Caco-2 (cell line): ENCODE measurements at regions of chr3 and their contacts with region 1.

Region 1: GRCh38 chr3:75171630-75172230 is 492.4 kb upstream of the FRG2C start:
- DNase-seq: peak in 1 of 2 experiments; percentile 12
- H3K4me3 ChIP-seq: no peak overlapping the region
- H3K4me3 Mint-ChIP-seq: no peak overlapping the region
- H3K27ac Mint-ChIP-seq: no peak overlapping the region
- H3K4me1 ChIP-seq: no peaks in the 10 kb centered on the region
- H3K4me1 Mint-ChIP-seq: no peaks in the 10 kb centered on the region
- H3K27me3 ChIP-seq: no peaks in the 10 kb centered on the region
- H3K27me3 Mint-ChIP-seq: peaks cover under 1% of the 10 kb centered on the region
- CTCF ChIP-seq: peak; percentile 18 to 26

Region 2: DNA sequence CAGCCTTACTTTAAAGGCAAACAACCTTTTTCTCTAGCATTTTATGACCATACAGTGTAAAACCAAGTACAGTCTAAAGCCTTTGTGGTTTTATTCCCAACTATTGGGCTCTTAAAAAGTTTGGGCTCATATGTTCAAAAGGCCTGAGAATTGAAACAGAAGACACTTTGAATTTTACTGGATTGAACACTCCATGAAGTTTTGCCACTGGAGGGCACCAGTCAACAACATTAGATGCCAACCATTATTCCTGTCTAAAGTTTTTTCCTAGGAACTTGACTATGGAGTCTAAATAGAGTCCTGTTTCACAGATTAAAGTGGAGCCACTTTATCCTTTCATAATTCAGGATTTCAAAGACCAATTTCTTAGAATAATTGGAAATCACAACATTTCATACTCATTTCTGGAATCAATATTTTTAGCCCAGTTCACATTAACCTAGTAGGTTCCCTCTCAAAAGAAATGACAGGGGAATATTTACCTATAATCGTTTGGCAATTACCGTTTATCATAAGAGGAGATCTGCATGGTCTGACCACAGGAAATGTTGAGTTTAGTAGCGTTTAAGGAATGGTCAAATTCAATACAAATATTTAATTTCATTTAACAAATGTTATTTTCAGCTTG is 1302.9 kb before region 1 on chr3:
- CTCF ChIA-PET with region 1: no interaction called
- POLR2A ChIA-PET with region 1: no interaction called
- intact Hi-C with region 1: loop called (anchors 5 kb)
- DNase-seq: peak in 1 of 2 experiments; percentile 26
- H3K4me3 ChIP-seq: no peak overlapping the region
- H3K4me3 Mint-ChIP-seq: no peak overlapping the region
- H3K27ac Mint-ChIP-seq: no peak overlapping the region
- H3K4me1 ChIP-seq: no peaks in the 10 kb centered on the region
- H3K4me1 Mint-ChIP-seq: no peaks in the 10 kb centered on the region
- H3K27me3 ChIP-seq: no peaks in the 10 kb centered on the region
- H3K27me3 Mint-ChIP-seq: peaks cover 9% of the 10 kb centered on the region
- CTCF ChIP-seq: peak; percentile 55 to 56

Region 3: GRCh38 chr3:74267588-74268184 is 904.0 kb before region 1 on chr3:
- CTCF ChIA-PET with region 1: no interaction called
- POLR2A ChIA-PET with region 1: no interaction called
- intact Hi-C with region 1: loop called (anchors 2 kb)
- DNase-seq: peak; percentile 36 to 60
- H3K4me3 ChIP-seq: no peak overlapping the region
- H3K4me3 Mint-ChIP-seq: no peak overlapping the region
- H3K27ac Mint-ChIP-seq: no peak overlapping the region
- H3K4me1 ChIP-seq: no peaks in the 10 kb centered on the region
- H3K4me1 Mint-ChIP-seq: peaks cover 7% of the 10 kb centered on the region
- H3K27me3 ChIP-seq: no peaks in the 10 kb centered on the region
- H3K27me3 Mint-ChIP-seq: peaks cover 4% of the 10 kb centered on the region
- CTCF ChIP-seq: peak; percentile 59 to 79

Region 4: GRCh38 chr3:75015280-75015679 is 156.4 kb before region 1 on chr3:
- CTCF ChIA-PET with region 1: no interaction called
- POLR2A ChIA-PET with region 1: no interaction called
- intact Hi-C with region 1: loop called (anchors 10 kb)
- DNase-seq: no peak
- H3K4me3 ChIP-seq: no peak overlapping the region
- H3K4me3 Mint-ChIP-seq: no peak overlapping the region
- H3K27ac Mint-ChIP-seq: no peak overlapping the region
- H3K4me1 ChIP-seq: no peaks in the 10 kb centered on the region
- H3K4me1 Mint-ChIP-seq: no peaks in the 10 kb centered on the region
- H3K27me3 ChIP-seq: no peaks in the 10 kb centered on the region
- H3K27me3 Mint-ChIP-seq: no peaks in the 10 kb centered on the region
- CTCF ChIP-seq: no peak

Region 5: GRCh38 chr3:75129101-75129500 is 42.6 kb before region 1 on chr3:
- CTCF ChIA-PET with region 1: no interaction called
- POLR2A ChIA-PET with region 1: no interaction called
- intact Hi-C with region 1: no loop called
- DNase-seq: no peak
- H3K4me3 ChIP-seq: no peak overlapping the region
- H3K4me3 Mint-ChIP-seq: no peak overlapping the region
- H3K27ac Mint-ChIP-seq: no peak overlapping the region
- H3K4me1 ChIP-seq: no peaks in the 10 kb centered on the region
- H3K4me1 Mint-ChIP-seq: no peaks in the 10 kb centered on the region
- H3K27me3 ChIP-seq: no peaks in the 10 kb centered on the region
- H3K27me3 Mint-ChIP-seq: no peaks in the 10 kb centered on the region
- CTCF ChIP-seq: no peak

Region 6: GRCh38 chr3:75140904-75141615 is 30.7 kb before region 1 on chr3:
- CTCF ChIA-PET with region 1: no interaction called
- POLR2A ChIA-PET with region 1: no interaction called
- intact Hi-C with region 1: loop called (anchors 1 kb)
- DNase-seq: peak in 1 of 2 experiments; percentile 13
- H3K4me3 ChIP-seq: no peak overlapping the region
- H3K4me3 Mint-ChIP-seq: no peak overlapping the region
- H3K27ac Mint-ChIP-seq: no peak overlapping the region
- H3K4me1 ChIP-seq: peaks cover 19% of the 10 kb centered on the region
- H3K4me1 Mint-ChIP-seq: peaks cover 13% of the 10 kb centered on the region
- H3K27me3 ChIP-seq: no peaks in the 10 kb centered on the region
- H3K27me3 Mint-ChIP-seq: no peaks in the 10 kb centered on the region
- CTCF ChIP-seq: no peak

Region 7: GRCh38 chr3:75192146-75192616 is 20.5 kb after region 1 on chr3:
- CTCF ChIA-PET with region 1: no interaction called
- POLR2A ChIA-PET with region 1: no interaction called
- intact Hi-C with region 1: no loop called
- DNase-seq: peak; percentile 37 to 67
- H3K4me3 ChIP-seq: no peak overlapping the region
- H3K4me3 Mint-ChIP-seq: no peak overlapping the region
- H3K27ac Mint-ChIP-seq: no peak overlapping the region
- H3K4me1 ChIP-seq: no peaks in the 10 kb centered on the region
- H3K4me1 Mint-ChIP-seq: no peaks in the 10 kb centered on the region
- H3K27me3 ChIP-seq: no peaks in the 10 kb centered on the region
- H3K27me3 Mint-ChIP-seq: no peaks in the 10 kb centered on the region
- CTCF ChIP-seq: peak; percentile 79 to 82

Region 8: GRCh38 chr3:75218577-75218976 is 46.8 kb after region 1 on chr3:
- CTCF ChIA-PET with region 1: no interaction called
- POLR2A ChIA-PET with region 1: no interaction called
- intact Hi-C with region 1: no loop called
- DNase-seq: no peak
- H3K4me3 ChIP-seq: no peak overlapping the region
- H3K4me3 Mint-ChIP-seq: no peak overlapping the region
- H3K27ac Mint-ChIP-seq: no peak overlapping the region
- H3K4me1 ChIP-seq: no peaks in the 10 kb centered on the region
- H3K4me1 Mint-ChIP-seq: no peaks in the 10 kb centered on the region
- H3K27me3 ChIP-seq: no peaks in the 10 kb centered on the region
- H3K27me3 Mint-ChIP-seq: peaks cover 5% of the 10 kb centered on the region
- CTCF ChIP-seq: no peak

Region 9: DNA sequence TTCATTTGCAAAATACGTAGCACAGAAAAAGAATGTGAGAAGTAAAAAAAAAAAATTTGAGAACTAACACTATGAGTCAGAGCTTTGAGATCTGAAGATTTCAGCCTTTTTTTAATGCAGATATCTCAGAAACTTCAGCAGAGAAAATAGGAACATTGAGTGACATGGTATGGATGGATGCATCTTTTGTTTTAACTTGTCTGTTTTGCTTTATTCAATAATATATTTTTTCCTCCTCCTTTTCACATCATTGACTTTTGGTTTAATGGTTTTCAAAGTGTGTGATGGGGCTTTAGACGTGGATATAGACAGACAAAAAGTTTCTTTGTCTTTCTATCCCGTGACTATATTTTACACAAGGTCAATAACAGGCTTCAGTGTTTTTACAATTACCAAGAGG is 65.7 kb after region 1 on chr3:
- CTCF ChIA-PET with region 1: no interaction called
- POLR2A ChIA-PET with region 1: no interaction called
- intact Hi-C with region 1: no loop called
- DNase-seq: no peak
- H3K4me3 ChIP-seq: no peak overlapping the region
- H3K4me3 Mint-ChIP-seq: no peak overlapping the region
- H3K27ac Mint-ChIP-seq: no peak overlapping the region
- H3K4me1 ChIP-seq: no peaks in the 10 kb centered on the region
- H3K4me1 Mint-ChIP-seq: no peaks in the 10 kb centered on the region
- H3K27me3 ChIP-seq: no peaks in the 10 kb centered on the region
- H3K27me3 Mint-ChIP-seq: no peaks in the 10 kb centered on the region
- CTCF ChIP-seq: no peak